B cell (primary cell): ENCODE measurements at regions of chr17 and their contacts with region 1.

Region 1: DNA sequence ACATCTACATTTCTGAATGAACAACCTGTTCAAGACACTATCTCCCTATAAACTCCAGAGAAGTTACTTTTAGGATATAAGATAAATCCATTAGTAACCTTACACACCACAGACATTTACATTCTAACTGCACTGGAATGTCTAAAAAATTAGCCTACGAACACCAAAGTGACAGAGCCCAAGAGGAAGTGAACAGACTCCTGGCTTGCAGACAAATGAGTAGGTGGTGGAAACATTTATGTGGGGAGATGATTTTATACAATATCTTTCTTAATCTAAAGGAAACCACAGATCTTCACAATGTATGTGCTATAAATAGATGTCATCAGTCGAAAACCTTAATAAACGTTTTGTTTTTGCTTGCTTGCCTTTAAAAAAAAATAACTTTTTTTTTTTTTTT is 18.8 kb downstream of the ZNF652 start:
- DNase-seq: peak; percentile 30
- ATAC-seq: peak; percentile 24
- H3K4me3 ChIP-seq: no peak overlapping the region
- H3K4me3 Mint-ChIP-seq: peak overlapping the region; percentile 79
- H3K27ac ChIP-seq: peak overlapping the region in 1 of 2 donors; percentile 84
- H3K27ac Mint-ChIP-seq: peak overlapping the region; percentile 47
- H3K4me1 ChIP-seq: peaks cover 31 to 41% of the 10 kb centered on the region in 2 donors
- H3K4me1 Mint-ChIP-seq: peaks cover 54% of the 10 kb centered on the region
- H3K27me3 ChIP-seq: no peaks in the 10 kb centered on the region
- H3K27me3 Mint-ChIP-seq: no peaks in the 10 kb centered on the region
- CTCF ChIP-seq: no peak

Region 2: DNA sequence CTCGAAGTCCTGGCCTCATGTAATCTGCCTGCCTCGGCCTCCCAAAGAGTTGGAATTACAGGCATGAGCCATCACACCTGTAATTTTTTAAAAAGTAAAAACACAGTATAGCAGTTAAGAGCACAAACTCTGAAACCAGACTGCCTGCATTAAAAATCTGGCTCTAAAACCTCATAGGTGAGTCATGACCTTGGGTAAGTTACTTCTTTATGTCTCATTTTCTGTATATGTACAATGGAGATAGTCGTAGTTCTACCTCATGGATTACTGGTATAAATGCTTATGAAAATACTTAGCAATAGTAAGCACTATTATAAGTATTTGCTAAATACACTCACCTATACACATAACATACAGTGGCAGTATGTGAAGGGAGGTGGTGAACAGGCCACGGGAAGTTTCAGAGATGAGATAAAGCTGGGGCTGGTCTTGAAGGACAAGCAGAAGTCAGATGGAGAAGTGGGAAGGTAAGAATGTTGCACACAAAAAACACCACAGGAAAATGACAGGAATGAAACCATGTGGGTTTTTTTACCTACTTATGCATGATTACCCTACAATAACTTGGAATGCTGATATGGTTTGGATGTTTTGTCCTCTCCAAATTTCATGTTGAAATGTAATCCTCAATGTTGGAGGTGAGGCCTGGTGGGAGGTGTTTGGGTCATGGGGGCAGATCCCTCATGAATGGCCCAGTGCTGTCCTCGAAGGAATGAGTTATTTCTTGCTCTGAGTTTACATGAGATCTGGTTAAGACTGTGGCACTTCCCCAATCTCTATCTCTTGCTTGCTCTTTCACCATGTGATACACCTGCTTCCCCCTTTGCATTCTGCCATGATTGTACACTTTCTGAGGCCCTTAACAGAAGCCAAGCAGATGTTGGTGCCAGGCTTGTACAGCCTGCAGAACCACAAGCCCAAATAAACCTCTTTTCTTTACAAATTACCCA is 15.2 kb before region 1 on chr17:
- CTCF ChIA-PET with region 1: interaction called, 6 read pairs
- POLR2A ChIA-PET with region 1: no interaction called
- intact Hi-C with region 1: loop called (anchors 2 kb)
- DNase-seq: peak; percentile 60
- ATAC-seq: peak; percentile 77
- H3K4me3 ChIP-seq: no peak overlapping the region
- H3K4me3 Mint-ChIP-seq: peak overlapping the region; percentile 4
- H3K27ac ChIP-seq: peak overlapping the region; percentile 15 to 76
- H3K27ac Mint-ChIP-seq: peak overlapping the region; percentile 85
- H3K4me1 ChIP-seq: peaks cover 15 to 16% of the 10 kb centered on the region in 2 donors
- H3K4me1 Mint-ChIP-seq: peaks cover 57% of the 10 kb centered on the region
- H3K27me3 ChIP-seq: no peaks in the 10 kb centered on the region
- H3K27me3 Mint-ChIP-seq: no peaks in the 10 kb centered on the region
- CTCF ChIP-seq: no peak